Heart right ventricle (tissue), 16 donors: ENCODE measurements at regions of chr17 and their contacts with region 1.

Region 1: DNA sequence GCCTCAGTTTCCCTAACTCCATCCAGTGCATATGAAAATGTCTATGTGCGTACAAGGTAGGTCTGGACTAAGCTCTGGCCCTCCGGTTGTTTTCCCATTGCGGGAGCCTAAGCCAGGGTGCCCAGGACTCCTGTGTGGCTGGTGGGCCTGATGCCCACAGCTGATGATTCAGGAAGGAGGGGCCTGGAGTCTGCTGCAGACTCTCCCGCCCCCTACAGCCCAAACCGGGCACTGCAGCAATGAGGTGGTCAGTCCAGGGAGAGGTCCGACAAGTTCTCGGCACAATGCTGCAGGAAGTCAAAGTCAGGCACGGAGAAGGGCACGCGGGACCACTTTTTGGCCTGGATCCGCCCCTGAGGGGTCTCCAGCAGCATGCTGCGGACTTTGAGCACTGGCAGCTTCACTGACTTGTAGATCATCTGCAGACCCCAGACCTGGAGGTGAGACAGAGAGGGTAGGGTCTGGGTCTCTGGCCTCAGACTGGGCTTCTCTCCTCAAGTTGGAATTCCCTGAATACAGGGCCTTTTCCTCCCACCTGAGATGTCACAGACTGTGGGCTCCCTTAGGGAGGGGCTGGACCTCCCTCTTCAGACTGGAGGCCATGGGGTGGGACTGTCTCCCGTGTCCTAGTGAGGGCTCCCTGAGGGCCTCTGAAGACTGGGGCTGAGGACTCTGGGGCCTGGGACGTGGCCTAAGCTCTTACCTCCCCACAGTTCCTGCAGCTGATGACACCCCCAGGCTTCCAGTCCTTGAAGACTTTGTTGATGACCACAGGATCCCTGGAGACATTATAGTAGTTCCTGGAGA is 3.4 kb upstream of the ZNF385C start:
- DNase-seq: peak; percentile 71 to 85
- ATAC-seq: peak; percentile 63 to 87 (median 82)
- H3K4me3 ChIP-seq: no peak overlapping the region
- H3K27ac ChIP-seq: no peak overlapping the region
- H3K4me1 ChIP-seq: peaks cover 0 to 17% (median 10%) of the 10 kb centered on the region in 9 donors
- H3K27me3 ChIP-seq: peaks cover 2 to 21% (median 19%) of the 10 kb centered on the region in 7 donors
- CTCF ChIP-seq: peak; percentile 69 to 89 (median 83)

Region 2: DNA sequence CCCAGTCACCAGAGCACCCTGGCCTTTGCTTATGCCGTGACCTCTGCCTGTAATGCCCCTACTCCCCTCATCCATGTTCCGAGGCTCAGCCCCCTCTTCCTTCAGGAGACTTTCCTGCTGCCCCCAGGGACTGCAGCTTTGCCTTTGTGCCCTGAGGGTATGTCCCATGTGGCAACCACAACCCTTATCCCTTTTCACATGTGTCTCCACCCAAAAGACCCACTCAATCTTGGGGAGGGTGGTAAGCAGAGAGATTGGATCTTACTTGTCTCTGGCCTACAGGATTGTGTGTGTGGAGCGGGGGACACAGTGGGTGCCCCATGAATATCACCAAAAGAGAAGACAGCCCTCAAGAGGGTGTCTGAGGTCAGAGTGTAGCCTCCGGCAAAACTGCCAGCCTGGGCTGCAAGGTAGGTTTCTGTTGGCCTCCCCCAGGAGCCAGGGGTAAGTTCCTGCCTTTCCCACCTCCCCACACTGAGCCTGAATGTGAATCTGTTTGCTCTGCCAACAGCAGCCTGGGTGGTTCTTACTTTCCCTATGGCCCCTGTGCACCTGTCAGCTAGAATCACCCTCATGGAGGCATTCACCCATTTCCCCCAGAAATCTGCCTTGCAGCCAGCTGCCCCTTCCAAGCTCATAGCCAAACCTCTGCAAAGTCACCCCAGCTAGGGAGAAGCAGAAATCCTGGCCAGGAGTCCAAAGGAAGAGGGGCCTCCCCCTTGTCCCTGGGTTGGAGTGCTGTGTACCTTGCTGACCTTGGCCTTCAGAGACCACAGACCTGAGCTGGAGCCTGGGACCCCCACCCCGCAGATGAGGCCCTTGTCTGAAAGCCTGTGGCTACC is 39.8 kb before region 1 on chr17:
- intact Hi-C with region 1: loop called in 6 of 10 experiments (anchors 5 kb)
- DNase-seq: no peak
- ATAC-seq: no peak
- H3K4me3 ChIP-seq: no peak overlapping the region
- H3K27ac ChIP-seq: no peak overlapping the region
- H3K4me1 ChIP-seq: peaks cover 0 to 9% (median 3%) of the 10 kb centered on the region in 9 donors
- H3K27me3 ChIP-seq: peaks cover 0 to 7% (median 0%) of the 10 kb centered on the region in 7 donors
- CTCF ChIP-seq: no peak

Region 3: GRCh38 chr17:42142371-42142896 is 40.7 kb after region 1 on chr17:
- intact Hi-C with region 1: no loop called
- DNase-seq: no peak
- ATAC-seq: peak; percentile 12 to 90 (median 74)
- H3K4me3 ChIP-seq: no peak overlapping the region
- H3K27ac ChIP-seq: peak overlapping the region in 8 of 10 donors; percentile 25 to 70 (median 44)
- H3K4me1 ChIP-seq: peaks cover 24 to 66% (median 54%) of the 10 kb centered on the region in 9 donors
- H3K27me3 ChIP-seq: no peaks in the 10 kb centered on the region
- CTCF ChIP-seq: no peak